ENCODE measurements at regions of chr13 and their contacts with region 1.

Region 1: DNA sequence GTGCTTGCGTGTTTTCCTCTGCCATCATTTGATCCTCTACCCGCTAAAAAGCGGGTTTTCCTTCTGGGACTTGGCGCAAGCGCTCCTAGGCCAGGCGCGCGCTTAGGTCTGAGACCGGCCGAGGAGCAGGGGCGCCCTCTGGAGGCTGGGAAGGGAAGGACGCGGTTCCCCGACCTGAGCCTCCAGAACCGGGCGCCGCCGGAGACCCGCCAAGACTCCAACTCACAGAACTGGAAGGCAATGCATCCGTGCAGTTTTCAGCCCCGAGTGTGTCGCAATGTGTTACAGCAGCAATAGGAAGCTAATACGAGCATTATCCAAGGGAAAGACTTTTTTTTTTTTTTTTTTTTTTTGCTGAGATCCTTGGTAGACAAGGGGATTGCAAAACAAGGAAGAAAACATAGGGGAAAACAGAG is 190.9 kb downstream of the COL4A1 start:
- H3K4me3 Mint-ChIP-seq: peak overlapping the region; percentile 50
- H3K27ac Mint-ChIP-seq: no peak overlapping the region
- H3K4me1 Mint-ChIP-seq: peaks cover 24% of the 10 kb centered on the region
- H3K27me3 Mint-ChIP-seq: peaks cover 33% of the 10 kb centered on the region

Region 2: GRCh38 chr13:108961542-108962125 is 1154.4 kb before region 1 on chr13:
- intact Hi-C with region 1: loop called (anchors 1 kb)
- H3K4me3 Mint-ChIP-seq: no peak overlapping the region
- H3K27ac Mint-ChIP-seq: no peak overlapping the region
- H3K4me1 Mint-ChIP-seq: peaks cover 7% of the 10 kb centered on the region
- H3K27me3 Mint-ChIP-seq: no peaks in the 10 kb centered on the region

Region 3: GRCh38 chr13:110187641-110188161 is 71.6 kb after region 1 on chr13:
- intact Hi-C with region 1: no loop called
- H3K4me3 Mint-ChIP-seq: no peak overlapping the region
- H3K27ac Mint-ChIP-seq: no peak overlapping the region
- H3K4me1 Mint-ChIP-seq: no peaks in the 10 kb centered on the region
- H3K27me3 Mint-ChIP-seq: peaks cover 9% of the 10 kb centered on the region

Region 4: GRCh38 chr13:110644892-110645521 is 528.9 kb after region 1 on chr13:
- intact Hi-C with region 1: no loop called
- H3K4me3 Mint-ChIP-seq: no peak overlapping the region
- H3K27ac Mint-ChIP-seq: no peak overlapping the region
- H3K4me1 Mint-ChIP-seq: peaks cover 10% of the 10 kb centered on the region
- H3K27me3 Mint-ChIP-seq: no peaks in the 10 kb centered on the region